GM12878 (cell line): ENCODE measurements at regions of chr6 and their contacts with region 1.

Region 1: DNA sequence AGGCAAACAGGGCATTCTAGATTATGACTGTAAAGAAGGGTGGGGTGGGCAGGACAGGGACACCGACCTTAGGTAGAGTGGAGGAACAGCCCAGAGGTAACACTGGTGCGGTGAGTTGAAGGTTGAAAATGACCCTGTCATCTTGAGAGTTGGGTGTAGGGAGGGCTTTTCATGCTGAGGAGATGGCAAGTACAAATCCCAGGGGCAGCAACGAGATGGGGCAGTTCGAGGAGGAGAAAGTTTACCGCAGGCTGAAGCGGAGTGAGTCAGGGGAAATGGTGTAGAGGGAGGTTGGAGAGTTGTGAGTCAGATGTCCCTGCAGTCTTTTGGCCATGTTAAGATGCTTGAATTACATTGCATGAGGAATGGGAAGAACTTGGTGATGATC is 101.1 kb downstream of the HIVEP1 start:
- DNase-seq: no peak
- ATAC-seq: peak; percentile 60
- H3K4me3 ChIP-seq: peak overlapping the region; percentile 32; the same call in 1 of the 2 replicates
- H3K27ac ChIP-seq: peak overlapping the region; percentile 88
- H3K4me1 ChIP-seq: peaks cover 49% of the 10 kb centered on the region
- H3K27me3 ChIP-seq: no peaks in the 10 kb centered on the region
- CTCF ChIP-seq: no peak
- EP300 ChIP-seq: no peak
- POLR2A ChIP-seq: peak; percentile 41; the same call in 1 of the 2 replicates
- RAD21 ChIP-seq: no peak

Region 2: DNA sequence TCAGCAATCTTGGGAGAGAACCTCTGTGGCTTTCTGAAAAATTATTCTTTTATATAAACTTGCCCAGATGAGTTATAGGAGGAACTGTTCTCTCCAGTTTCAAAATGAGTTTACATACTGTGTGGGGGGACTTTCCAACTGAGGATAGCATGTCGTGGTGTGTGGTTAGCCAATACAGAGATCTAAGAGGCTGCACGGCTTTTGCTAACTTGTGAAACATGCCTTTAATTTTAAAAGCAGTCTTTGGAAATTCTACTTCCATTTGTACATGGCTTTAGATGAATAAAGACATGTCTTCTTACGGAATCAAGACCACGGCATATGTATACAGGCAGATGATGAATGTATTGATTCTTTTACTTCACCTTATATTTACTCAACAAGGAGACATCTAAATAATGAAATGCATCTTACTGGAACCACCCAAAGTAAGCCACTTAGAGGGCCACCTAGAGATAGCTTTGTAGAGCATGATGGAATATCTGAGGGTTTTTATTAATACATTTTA is 61.3 kb before region 1 on chr6:
- CTCF ChIA-PET with region 1: no interaction called
- POLR2A ChIA-PET with region 1: interaction called, 8 read pairs
- RAD21 ChIA-PET with region 1: interaction called, 20 read pairs
- SMC1A ChIA-PET with region 1: interaction called, 4 read pairs
- in situ Hi-C with region 1: no loop called
- intact Hi-C with region 1: no loop called
- DNase-seq: peak; percentile 92
- ATAC-seq: peak; percentile 76
- H3K4me3 ChIP-seq: 0 out of 2 replicates have a peak overlapping the region, but pooled peaks have one; percentile 11
- H3K27ac ChIP-seq: peak overlapping the region; percentile 98
- H3K4me1 ChIP-seq: peaks cover 47% of the 10 kb centered on the region
- H3K27me3 ChIP-seq: no peaks in the 10 kb centered on the region
- CTCF ChIP-seq: peak in 1 of 3 experiments; percentile 6; a peak in 1 of 6 replicates
- EP300 ChIP-seq: peak; percentile 95 to 98
- POLR2A ChIP-seq: no peak
- RAD21 ChIP-seq: 0 out of 2 replicates have a peak, but pooled peaks have one; percentile 7

Region 3: DNA sequence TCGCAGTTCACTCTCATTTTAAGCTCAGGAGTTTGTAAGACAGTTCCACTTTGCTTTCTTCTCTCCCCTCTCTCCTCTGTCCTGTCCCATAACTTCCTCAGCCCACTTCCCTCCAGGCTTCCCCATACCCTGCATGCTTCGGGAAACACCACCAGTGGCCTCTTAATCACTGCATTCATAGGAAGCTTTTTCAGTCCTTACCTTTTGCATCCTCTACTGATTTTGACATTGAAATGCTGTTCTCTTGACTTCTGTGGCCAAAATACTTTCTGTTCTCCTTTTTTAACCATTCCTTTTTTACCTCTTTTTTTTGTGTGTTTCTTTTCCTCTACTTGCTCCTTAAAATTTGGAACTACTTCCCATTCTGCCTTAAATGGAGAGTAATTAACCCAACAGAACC is 31.4 kb before region 1 on chr6:
- CTCF ChIA-PET with region 1: interaction called, 3 read pairs
- POLR2A ChIA-PET with region 1: interaction called, 3 read pairs
- RAD21 ChIA-PET with region 1: interaction called, 3 read pairs
- SMC1A ChIA-PET with region 1: interaction called, 10 read pairs
- in situ Hi-C with region 1: no loop called
- intact Hi-C with region 1: no loop called
- DNase-seq: no peak
- ATAC-seq: peak; percentile 68
- H3K4me3 ChIP-seq: peak overlapping the region; percentile 32; the same call in 1 of the 2 replicates
- H3K27ac ChIP-seq: peak overlapping the region; percentile 50
- H3K4me1 ChIP-seq: peaks cover 28% of the 10 kb centered on the region
- H3K27me3 ChIP-seq: no peaks in the 10 kb centered on the region
- CTCF ChIP-seq: no peak
- EP300 ChIP-seq: no peak
- POLR2A ChIP-seq: no peak
- RAD21 ChIP-seq: no peak

Region 4: GRCh38 chr6:12090714-12091113 is 22.5 kb before region 1 on chr6:
- CTCF ChIA-PET with region 1: interaction called, 5 read pairs
- POLR2A ChIA-PET with region 1: interaction called, 4 read pairs
- RAD21 ChIA-PET with region 1: interaction called, 9 read pairs
- SMC1A ChIA-PET with region 1: interaction called, 11 read pairs
- in situ Hi-C with region 1: no loop called
- intact Hi-C with region 1: no loop called
- DNase-seq: no peak
- ATAC-seq: peak; percentile 36; the same call in 2 of the 3 replicates
- H3K4me3 ChIP-seq: no peak overlapping the region
- H3K27ac ChIP-seq: no peak overlapping the region
- H3K4me1 ChIP-seq: no peaks in the 10 kb centered on the region
- H3K27me3 ChIP-seq: no peaks in the 10 kb centered on the region
- CTCF ChIP-seq: no peak
- EP300 ChIP-seq: no peak
- POLR2A ChIP-seq: no peak
- RAD21 ChIP-seq: no peak

Region 5: DNA sequence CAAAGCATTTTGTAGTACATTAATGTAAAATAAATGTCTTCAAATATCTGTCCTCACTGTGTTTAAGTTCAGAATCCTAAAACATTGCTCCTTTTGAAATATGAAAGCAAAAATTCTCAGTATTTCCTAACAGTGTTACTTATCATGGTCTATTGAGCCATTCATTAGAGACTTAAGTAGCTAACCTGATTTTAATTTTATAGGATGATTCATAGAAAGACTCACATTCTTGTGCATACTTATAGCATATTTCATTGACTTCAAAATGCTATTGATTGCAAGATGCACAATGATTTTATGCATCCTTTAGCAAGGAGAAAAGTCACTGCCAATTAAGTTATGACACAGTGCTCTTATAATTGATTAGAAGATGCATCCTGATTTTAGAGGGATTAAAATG is 15.4 kb before region 1 on chr6:
- CTCF ChIA-PET with region 1: interaction called, 6 read pairs
- POLR2A ChIA-PET with region 1: interaction called, 10 read pairs
- RAD21 ChIA-PET with region 1: interaction called, 9 read pairs
- SMC1A ChIA-PET with region 1: interaction called, 14 read pairs
- in situ Hi-C with region 1: no loop called
- intact Hi-C with region 1: no loop called
- DNase-seq: no peak
- ATAC-seq: no peak
- H3K4me3 ChIP-seq: no peak overlapping the region
- H3K27ac ChIP-seq: no peak overlapping the region
- H3K4me1 ChIP-seq: 0 out of 2 replicates have a peak, but pooled peaks cover 3% of the 10 kb centered on the region
- H3K27me3 ChIP-seq: no peaks in the 10 kb centered on the region
- CTCF ChIP-seq: no peak
- EP300 ChIP-seq: no peak
- POLR2A ChIP-seq: no peak
- RAD21 ChIP-seq: no peak

Region 6: DNA sequence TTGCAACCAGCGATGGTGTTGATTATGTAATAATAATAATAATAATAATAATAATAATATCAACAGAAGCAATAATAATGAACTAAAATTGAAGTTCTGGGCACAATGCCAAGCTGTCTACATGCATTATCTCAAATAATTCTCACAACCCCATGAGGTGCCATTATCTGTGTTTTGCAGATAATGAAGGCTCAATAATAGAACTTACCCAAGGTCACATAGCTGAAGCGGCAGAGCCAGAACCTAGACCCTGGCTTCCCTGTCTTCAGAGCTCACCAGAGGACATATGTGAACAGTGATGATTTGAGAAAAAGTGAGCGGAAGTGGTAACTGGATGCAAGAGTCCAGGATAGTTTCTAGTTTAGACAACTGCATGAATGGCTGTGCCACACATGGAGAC is 10.0 kb before region 1 on chr6:
- CTCF ChIA-PET with region 1: interaction called, 6 read pairs
- POLR2A ChIA-PET with region 1: interaction called, 10 read pairs
- RAD21 ChIA-PET with region 1: interaction called, 14 read pairs
- SMC1A ChIA-PET with region 1: interaction called, 14 read pairs
- in situ Hi-C with region 1: no loop called
- intact Hi-C with region 1: no loop called
- DNase-seq: no peak
- ATAC-seq: peak; percentile 27; the same call in 2 of the 3 replicates
- H3K4me3 ChIP-seq: no peak overlapping the region
- H3K27ac ChIP-seq: 0 out of 2 replicates have a peak overlapping the region, but pooled peaks have one; percentile 35
- H3K4me1 ChIP-seq: peaks cover 7% of the 10 kb centered on the region
- H3K27me3 ChIP-seq: no peaks in the 10 kb centered on the region
- CTCF ChIP-seq: no peak
- EP300 ChIP-seq: no peak
- POLR2A ChIP-seq: no peak
- RAD21 ChIP-seq: no peak

Region 7: DNA sequence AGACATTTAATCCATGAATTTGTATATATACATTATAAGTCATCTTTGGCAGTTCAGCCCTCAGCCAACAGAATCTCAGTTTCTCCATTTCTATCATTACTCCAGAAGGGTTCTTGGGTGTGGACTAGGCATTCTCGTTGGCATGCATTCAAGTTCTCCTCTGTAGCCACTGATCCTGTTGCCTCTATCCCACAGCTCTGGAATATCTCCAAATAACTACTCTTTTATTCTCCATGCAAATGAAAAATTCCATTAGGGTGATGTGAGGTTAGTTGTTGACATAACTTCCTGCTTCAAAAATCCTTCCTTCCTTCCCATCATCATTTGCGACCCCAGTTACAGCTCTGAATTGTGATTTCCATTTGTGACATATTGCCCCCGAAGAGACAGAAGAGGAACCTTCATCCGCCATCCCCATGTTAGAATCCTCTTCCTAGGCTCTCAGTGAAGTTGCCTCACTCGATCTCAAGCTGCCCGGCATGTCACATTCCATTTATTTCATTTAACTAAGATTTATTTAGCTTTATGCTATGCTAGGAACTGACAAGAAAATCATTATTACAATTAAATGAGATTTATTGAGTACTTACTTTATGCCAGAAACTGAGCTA is 83.2 kb after region 1 on chr6:
- CTCF ChIA-PET with region 1: no interaction called
- POLR2A ChIA-PET with region 1: no interaction called
- RAD21 ChIA-PET with region 1: no interaction called
- SMC1A ChIA-PET with region 1: no interaction called
- in situ Hi-C with region 1: no loop called
- intact Hi-C with region 1: no loop called
- DNase-seq: no peak
- ATAC-seq: no peak
- H3K4me3 ChIP-seq: no peak overlapping the region
- H3K27ac ChIP-seq: no peak overlapping the region
- H3K4me1 ChIP-seq: no peaks in the 10 kb centered on the region
- H3K27me3 ChIP-seq: no peaks in the 10 kb centered on the region
- CTCF ChIP-seq: no peak
- EP300 ChIP-seq: no peak
- POLR2A ChIP-seq: no peak
- RAD21 ChIP-seq: no peak